ENCODE measurements at regions of chr7 and their contacts with region 1.

Region 1: GRCh38 chr7:67462781-67463191 is 466.2 kb downstream of the TYW1 start:
- DNase-seq: peak; percentile 34
- H3K4me3 ChIP-seq: no peak overlapping the region
- H3K27ac ChIP-seq: peak overlapping the region in 2 of 4 donors; percentile 37 to 74
- H3K4me1 ChIP-seq: peaks cover 3 to 14% (median 9%) of the 10 kb centered on the region in 4 donors
- H3K27me3 ChIP-seq: no peaks in the 10 kb centered on the region
- CTCF ChIP-seq: no peak
- EP300 ChIP-seq: peak; percentile 18
- POLR2A ChIP-seq: no peak

Region 2: DNA sequence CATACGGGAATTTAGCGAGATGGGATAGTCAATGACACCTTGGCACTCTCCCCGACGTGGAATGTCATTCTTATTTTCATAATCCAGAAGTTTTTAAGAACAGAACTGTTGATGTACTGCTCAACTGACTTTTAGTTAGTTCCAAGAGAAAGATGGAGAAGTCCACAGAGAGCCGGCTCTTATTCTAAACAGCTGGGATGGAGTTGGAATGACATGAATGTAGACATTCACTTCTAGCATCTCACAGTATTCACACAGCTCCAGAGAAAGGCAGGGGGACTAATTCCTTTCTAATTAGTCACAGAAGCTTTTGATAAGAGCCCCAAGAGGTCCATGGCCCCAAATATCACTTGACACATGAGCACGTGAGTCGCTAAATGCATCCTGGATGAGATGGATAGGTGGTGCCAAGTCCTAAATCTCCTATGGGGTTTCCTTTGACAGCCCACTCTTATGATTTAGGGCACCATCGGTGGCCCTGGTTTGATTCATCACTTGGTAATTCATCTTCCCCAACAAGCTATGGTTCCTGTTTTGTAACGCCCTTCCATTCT is 1715.2 kb after region 1 on chr7:
- in situ Hi-C with region 1: no loop called
- intact Hi-C with region 1: loop called (anchors 5 kb)
- DNase-seq: no peak
- H3K4me3 ChIP-seq: no peak overlapping the region
- H3K27ac ChIP-seq: peak overlapping the region; percentile 29 to 72 (median 45)
- H3K4me1 ChIP-seq: peaks cover 0 to 7% (median 0%) of the 10 kb centered on the region in 4 donors
- H3K27me3 ChIP-seq: no peaks in the 10 kb centered on the region
- CTCF ChIP-seq: no peak
- EP300 ChIP-seq: no peak
- POLR2A ChIP-seq: no peak

Measured in transverse colon (tissue), 4 donors.